ENCODE measurements at regions of chr5 and their contacts with region 1.

Region 1: GRCh38 chr5:59380350-59380951 is 513.1 kb downstream of the PDE4D start:
- DNase-seq: peak; percentile 45
- CTCF ChIP-seq: peak; percentile 47

Region 2: GRCh38 chr5:59180515-59180914 is 199.9 kb before region 1 on chr5:
- CTCF ChIA-PET with region 1: interaction called, 71 read pairs
- POLR2A ChIA-PET with region 1: no interaction called
- DNase-seq: peak; percentile 22
- CTCF ChIP-seq: no peak

Region 3: GRCh38 chr5:59436364-59437148 is 56.1 kb after region 1 on chr5:
- CTCF ChIA-PET with region 1: no interaction called
- POLR2A ChIA-PET with region 1: no interaction called
- DNase-seq: no peak
- CTCF ChIP-seq: no peak

Measured in GM10248 (cell line).